ENCODE measurements at regions of chr22 and their contacts with region 1.

Region 1: GRCh38 chr22:17742527-17742902 is 31.8 kb downstream of the BID start:
- DNase-seq: peak; percentile 59 to 83
- ATAC-seq: no peak
- H3K4me3 ChIP-seq: no peak overlapping the region
- H3K27ac ChIP-seq: no peak overlapping the region
- H3K4me1 ChIP-seq: no peaks in the 10 kb centered on the region
- H3K27me3 ChIP-seq: no peaks in the 10 kb centered on the region

Region 2: DNA sequence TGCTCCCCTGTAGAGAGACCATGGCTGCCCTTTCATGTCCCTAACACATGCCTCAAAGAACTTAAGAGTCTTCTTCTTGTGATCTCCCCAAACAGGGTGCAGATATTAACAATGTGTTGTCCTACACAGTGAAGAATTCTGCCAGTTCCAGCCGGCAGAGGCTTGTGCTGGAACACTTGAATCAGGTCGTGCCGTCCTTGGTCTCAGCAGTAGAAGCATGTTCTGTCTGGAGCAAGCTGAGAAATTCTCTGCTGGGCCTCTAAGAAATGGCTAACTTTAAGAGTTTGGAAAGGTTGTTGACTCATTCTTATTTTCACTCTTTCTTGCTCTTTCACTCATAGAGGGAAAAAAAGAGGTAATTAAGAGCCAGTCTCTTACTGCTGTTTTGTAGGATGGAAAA is 250.3 kb before region 1 on chr22:
- intact Hi-C with region 1: no loop called
- DNase-seq: no peak
- ATAC-seq: no peak
- H3K4me3 ChIP-seq: no peak overlapping the region
- H3K27ac ChIP-seq: no peak overlapping the region
- H3K4me1 ChIP-seq: no peaks in the 10 kb centered on the region
- H3K27me3 ChIP-seq: no peaks in the 10 kb centered on the region

Region 3: DNA sequence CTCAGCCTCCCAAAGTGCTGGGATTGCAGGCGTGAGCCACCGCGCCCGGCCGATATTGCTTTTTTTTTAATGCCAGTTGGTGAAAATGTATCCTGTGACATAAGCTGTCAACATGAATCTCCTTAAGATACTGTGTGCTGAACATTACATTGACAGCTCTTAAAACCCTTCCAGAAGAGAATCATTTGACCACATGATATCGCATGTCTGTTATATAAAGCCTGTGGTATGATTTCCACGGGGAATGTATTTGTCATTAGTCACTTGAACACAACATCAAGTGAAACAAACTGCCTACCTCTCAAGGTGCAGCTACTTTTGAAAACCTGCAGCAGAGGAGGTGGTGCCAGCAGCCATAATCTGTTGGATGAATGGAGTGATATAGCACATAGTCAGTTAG is 37.0 kb before region 1 on chr22:
- intact Hi-C with region 1: loop called in 1 of 2 experiments (anchors 2 kb)
- DNase-seq: no peak
- ATAC-seq: no peak
- H3K4me3 ChIP-seq: no peak overlapping the region
- H3K27ac ChIP-seq: no peak overlapping the region
- H3K4me1 ChIP-seq: no peaks in the 10 kb centered on the region
- H3K27me3 ChIP-seq: no peaks in the 10 kb centered on the region